ENCODE measurements at regions of chr6 and their contacts with region 1.

Region 1: DNA sequence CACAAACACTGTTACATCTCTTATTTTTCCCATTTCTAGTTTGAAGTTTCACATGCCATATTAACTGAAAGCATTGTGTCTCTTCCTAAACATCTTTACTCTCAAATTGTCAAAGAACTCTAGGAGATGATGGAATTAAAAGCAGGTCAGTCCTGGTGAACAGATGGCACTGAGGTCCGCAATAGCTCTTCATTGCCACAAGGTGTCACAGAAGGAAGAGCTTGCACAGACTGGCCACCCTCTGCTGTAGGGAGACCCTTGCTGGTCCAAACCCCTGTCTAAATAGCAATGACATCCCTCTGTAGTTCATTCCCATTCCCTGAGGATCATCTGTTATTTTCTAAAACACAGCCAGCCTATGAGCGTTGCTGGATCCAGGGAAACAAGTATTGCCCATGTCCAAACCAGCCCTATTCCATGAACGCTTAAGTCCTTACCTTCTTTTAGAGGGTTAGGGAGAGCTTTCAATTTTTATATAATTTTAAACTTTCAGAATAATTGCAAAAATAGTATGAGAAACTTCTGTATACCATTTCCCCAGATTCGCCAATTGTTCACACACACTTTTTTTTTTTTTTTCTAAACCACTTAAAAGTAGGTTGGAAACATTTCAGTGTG is 10.1 kb upstream of the HDAC2 start:
- DNase-seq: peak; percentile 69

Region 2: DNA sequence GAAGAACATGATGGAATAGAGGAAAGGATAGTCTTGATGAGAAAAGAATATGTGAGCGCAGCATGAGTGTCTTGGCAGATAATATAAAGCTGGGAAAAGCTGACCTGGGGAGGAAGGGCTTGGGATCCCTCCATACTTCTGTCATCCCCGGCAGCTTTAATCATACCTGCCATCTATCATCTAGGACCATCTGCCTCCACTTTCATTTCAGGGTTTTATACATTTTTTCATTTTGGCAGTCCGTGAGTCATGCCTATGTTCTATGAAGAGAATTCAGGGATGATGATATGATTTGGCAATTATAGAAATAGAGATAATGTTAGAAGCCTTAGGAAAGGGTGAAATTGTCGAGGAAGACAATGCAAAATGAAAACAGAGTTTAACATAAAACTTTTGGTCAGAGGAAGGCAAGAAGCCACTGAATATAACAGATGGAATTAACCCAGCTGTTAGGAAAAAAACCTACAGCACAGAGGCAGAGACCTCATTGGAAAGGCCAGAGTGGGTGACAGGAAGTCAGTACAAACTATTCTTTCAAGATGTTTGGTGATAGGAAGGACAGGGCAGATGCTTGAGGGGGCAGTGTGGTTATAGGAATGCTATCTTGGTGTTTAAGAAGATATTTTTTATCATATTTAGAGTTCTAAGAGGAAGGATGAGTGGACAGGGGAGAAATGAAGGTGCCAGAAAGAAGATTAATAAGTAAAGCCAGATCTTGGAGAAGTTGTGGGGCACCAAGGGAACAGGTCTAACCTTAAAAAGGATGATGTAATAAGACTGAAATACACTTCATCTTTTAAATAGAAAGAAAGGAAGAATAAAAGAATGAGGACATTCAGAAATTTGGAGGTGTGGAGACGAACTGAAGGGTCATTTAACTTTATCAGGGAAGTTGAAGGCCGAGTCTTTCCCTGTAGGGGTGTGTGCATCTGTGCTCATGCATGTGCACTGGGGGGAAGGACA is 86.1 kb before region 1 on chr6:
- CTCF ChIA-PET with region 1: no interaction called
- POLR2A ChIA-PET with region 1: no interaction called
- DNase-seq: no peak

Region 3: GRCh38 chr6:113970805-113971676 is 10.0 kb before region 1 on chr6 and contains the start of gene HDAC2:
- CTCF ChIA-PET with region 1: interaction called, 4 read pairs
- POLR2A ChIA-PET with region 1: interaction called, 10 read pairs
- DNase-seq: peak; percentile 95

Region 4: GRCh38 chr6:114762145-114762544 is 781.1 kb after region 1 on chr6:
- CTCF ChIA-PET with region 1: no interaction called
- POLR2A ChIA-PET with region 1: no interaction called
- DNase-seq: no peak